K562 (cell line): ENCODE measurements at regions of chr1 and their contacts with region 1.

Region 1: DNA sequence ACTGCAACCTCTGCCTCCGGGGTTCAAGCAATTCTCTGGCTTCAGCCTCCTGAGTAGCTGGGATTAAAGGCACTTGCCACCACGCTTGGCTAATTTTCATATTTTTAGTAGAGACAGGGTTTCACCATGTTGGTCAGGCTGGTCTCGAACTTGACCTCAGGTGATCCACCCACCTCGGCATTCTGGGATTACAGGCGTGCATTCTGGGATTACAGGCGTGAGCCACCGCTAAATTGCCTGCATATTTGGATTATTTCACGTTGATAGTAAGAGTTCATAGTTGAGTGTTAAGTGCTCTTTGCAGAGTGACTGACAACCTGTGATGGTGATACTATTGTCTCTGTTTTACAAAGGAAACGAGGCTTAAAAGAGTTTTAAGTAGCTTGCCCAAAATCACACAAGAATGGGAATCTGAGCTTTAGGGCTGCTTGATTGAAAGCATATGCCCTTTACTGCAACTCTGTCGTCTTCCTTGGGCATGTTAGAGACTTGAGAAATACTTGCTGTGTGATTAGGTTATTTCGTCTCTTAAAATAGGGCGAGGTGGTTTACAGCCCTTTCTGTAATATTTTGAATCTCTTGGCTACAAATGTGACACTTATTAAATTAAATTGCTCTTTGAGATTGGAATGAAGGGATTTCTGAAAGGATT is 12.4 kb downstream of the CDC42 start:
- DNase-seq: no peak
- ATAC-seq: no peak
- H3K4me3 ChIP-seq: no peak overlapping the region
- H3K27ac ChIP-seq: no peak overlapping the region
- H3K4me1 ChIP-seq: peaks cover 0 to 2% of the 10 kb centered on the region in 2 experiments; a peak in 2 of 5 replicates
- H3K27me3 ChIP-seq: no peaks in the 10 kb centered on the region
- CTCF ChIP-seq: no peak
- EP300 ChIP-seq: no peak
- POLR2A ChIP-seq: no peak
- RAD21 ChIP-seq: no peak

Region 2: DNA sequence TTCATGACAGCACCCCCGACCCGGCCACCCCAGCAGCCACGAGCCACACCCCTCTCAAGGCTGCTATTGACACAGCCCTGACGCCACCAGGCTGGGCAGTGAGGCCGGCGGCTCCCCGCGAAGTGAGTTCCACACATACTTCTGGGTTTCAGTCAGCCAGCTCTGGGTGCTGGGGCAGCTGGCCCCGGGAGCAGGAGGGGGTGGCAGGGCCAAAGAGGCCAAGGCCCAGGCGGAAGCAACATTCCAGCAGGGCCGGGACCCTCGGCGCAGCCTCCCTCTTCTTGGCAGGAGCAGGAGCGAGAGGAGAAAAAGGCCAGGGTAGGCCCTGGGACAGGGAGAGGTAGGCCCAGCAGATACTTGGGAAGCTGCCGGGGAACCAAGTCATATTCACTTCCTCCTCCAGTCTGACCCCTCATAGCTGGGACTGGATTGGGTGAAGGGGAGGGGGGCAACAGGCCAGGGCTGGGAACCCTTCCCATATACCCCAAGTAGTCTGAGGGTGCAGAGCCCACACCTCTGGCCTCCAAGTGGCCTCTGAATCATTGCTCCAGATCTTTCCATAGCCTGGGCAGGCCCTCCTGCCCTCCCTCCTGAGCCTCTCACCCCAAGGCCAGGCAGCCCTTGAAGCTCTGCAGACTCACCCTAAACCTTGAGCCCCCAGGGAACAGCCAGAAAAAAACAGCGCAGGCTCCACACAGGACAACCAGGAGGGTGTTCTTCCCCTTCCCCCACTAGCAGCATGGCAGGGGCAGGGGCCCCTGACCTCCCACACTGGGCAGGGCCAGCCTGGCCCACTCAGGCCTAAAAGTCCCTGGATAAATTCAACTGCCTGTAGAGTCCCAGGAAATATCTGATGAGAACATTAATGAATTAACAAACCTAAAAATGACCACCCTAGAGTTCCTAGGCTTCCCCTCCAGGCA is 133.4 kb before region 1 on chr1:
- CTCF ChIA-PET with region 1: no interaction called
- POLR2A ChIA-PET with region 1: no interaction called
- in situ Hi-C with region 1: no loop called
- intact Hi-C with region 1: no loop called
- DNase-seq: peak in 1 of 4 experiments; percentile 44
- ATAC-seq: 0 out of 3 replicates have a peak, but pooled peaks have one; percentile 4
- H3K4me3 ChIP-seq: no peak overlapping the region
- H3K27ac ChIP-seq: peak overlapping the region; percentile 17; the same call in 2 of the 3 replicates
- H3K4me1 ChIP-seq: peaks cover 59 to 72% of the 10 kb centered on the region in 2 experiments
- H3K27me3 ChIP-seq: no peaks in the 10 kb centered on the region
- CTCF ChIP-seq: no peak
- EP300 ChIP-seq: no peak
- POLR2A ChIP-seq: no peak
- RAD21 ChIP-seq: no peak

Region 3: DNA sequence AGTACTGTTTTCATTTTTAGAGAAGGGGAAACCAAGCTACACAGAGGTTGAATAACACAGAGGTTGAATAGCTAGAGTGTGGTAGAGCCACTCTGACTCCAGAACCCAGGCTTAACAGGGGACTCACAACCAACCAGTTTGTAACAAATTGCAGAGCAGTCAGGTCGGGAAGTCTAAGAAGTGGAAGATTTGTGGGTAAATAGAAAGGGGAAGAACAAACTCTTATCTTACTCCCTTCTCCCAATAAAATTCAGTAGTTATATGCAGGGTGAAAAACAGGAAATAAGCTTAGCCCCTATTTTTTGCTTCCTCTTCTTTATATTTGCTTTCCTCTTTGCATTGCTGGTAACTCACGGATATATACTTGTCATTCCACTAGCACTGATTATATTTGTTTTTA is 10.8 kb after region 1 on chr1:
- CTCF ChIA-PET with region 1: no interaction called
- POLR2A ChIA-PET with region 1: interaction called, 25 read pairs
- in situ Hi-C with region 1: no loop called
- intact Hi-C with region 1: no loop called
- DNase-seq: no peak
- ATAC-seq: peak; percentile 48
- H3K4me3 ChIP-seq: no peak overlapping the region
- H3K27ac ChIP-seq: peak overlapping the region; percentile 19; the same call in 1 of the 3 replicates
- H3K4me1 ChIP-seq: peaks cover 13 to 22% of the 10 kb centered on the region in 2 experiments
- H3K27me3 ChIP-seq: no peaks in the 10 kb centered on the region
- CTCF ChIP-seq: no peak
- EP300 ChIP-seq: no peak
- POLR2A ChIP-seq: no peak
- RAD21 ChIP-seq: no peak